Activated CD4-positive, alpha-beta memory T cell treated with anti-CD3 and anti-CD28 coated beads for 36 hours (primary cell): ENCODE measurements at regions of chr22 and their contacts with region 1.

Region 1: DNA sequence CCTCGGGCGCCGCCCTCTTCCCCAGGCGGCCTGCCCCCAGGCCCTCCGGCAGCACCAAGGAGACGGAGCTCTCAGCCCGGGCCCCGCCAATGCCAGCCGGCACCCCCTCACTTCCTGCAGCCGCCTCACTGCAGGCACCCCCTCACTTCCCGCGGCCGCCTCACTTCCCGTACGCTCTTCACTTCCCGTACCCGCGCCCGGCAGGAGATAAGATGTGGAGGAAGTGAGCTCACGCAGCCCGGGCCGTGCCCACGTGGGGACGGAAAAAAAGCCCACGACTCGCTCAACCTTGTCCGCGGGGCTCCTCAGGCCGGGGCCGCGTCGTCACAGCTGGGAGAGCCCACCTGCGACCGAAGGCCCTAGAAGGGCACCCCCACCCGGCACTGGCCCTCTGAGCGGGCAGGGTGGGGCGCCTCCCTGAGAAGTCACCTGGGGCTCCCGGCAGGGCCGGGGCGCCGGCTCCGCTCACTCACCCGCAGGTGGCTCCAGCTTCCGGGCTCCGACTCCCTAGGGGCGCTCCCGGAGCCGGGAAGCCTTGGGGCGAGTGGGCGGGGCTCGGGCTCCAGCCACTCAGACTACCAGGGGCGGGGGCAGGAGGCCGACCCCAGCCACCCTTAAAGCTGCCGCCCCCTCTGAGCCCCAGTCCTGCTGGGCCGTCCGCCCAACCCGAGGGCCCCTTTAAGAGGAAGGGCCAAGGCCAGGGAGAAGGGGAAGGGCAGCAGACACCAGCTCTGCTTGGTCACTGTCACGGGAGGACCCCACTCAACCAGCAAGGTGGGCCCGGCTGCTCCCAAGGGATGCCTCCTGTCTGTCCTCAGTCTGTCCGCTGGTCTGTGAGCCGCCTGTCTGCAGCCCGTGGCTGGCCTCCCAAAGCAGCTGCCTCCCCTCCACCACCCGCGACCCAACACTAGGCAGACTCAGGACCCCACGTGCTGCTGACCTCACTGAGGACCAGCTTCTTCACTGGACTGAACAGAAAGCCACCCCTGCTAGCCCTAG is 31.4 kb downstream of the PISD start:
- DNase-seq: peak; percentile 93
- H3K4me3 Mint-ChIP-seq: peak overlapping the region; percentile 81
- H3K27ac Mint-ChIP-seq: peak overlapping the region; percentile 91
- H3K4me1 Mint-ChIP-seq: peaks cover 61% of the 10 kb centered on the region
- H3K27me3 Mint-ChIP-seq: no peaks in the 10 kb centered on the region

Region 2: DNA sequence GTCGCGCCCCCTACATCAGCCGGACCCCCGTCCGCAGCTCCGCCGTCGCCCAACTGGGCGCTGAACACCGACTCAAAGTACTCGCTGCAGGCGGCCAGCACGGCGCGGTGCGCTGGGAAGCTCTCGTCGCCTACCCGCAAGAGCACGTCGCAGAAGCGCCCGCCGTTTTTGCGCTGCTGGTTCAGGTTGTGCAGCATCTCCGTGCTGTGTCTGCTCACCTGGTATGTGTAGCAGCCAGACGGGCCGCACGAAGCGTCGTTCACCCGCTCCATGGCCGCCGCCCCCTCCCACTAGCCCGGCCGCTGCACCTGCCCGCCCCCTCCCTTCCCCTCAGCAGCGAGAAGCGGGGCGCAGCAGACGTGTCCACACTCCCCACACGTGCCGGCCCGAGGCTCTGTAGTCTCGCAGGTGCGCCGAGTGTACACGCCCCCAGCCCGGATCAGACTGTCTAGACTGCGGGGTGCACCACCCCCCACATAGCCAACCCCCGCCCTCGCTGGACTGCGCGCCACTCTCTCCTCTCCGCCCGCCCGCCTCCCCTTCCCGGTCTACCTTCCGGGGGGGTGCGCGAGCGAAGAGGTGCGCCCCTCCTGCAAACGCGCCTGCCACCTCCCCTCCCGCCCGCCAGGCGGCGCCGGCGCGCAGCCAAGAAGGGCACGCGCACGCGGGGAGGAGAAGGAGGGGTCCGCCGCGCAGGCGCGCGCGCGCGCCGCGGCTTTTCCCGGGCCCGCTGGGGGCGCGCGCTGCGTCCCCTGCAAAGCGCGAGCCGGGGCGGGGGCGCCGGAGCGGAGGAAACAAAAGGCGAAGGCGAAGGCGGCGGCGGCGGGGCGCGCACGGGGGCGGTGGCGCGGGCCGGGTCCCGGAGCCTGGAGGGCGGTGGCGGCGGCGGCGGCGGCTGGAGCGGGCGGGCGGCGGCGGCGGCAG is 285.0 kb before region 1 on chr22:
- CTCF ChIA-PET with region 1: interaction called, 8 read pairs
- POLR2A ChIA-PET with region 1: interaction called, 3 read pairs
- intact Hi-C with region 1: loop called (anchors 2 kb)
- DNase-seq: peak; percentile 91
- H3K4me3 Mint-ChIP-seq: peak overlapping the region; percentile 89
- H3K27ac Mint-ChIP-seq: peak overlapping the region; percentile 91
- H3K4me1 Mint-ChIP-seq: peaks cover 46% of the 10 kb centered on the region
- H3K27me3 Mint-ChIP-seq: no peaks in the 10 kb centered on the region

Region 3: GRCh38 chr22:31451709-31452571 is 178.7 kb before region 1 on chr22:
- CTCF ChIA-PET with region 1: interaction called, 35 read pairs
- POLR2A ChIA-PET with region 1: no interaction called
- intact Hi-C with region 1: loop called (anchors 1 kb)
- DNase-seq: no peak
- H3K4me3 Mint-ChIP-seq: no peak overlapping the region
- H3K27ac Mint-ChIP-seq: peak overlapping the region; percentile 26
- H3K4me1 Mint-ChIP-seq: no peaks in the 10 kb centered on the region
- H3K27me3 Mint-ChIP-seq: no peaks in the 10 kb centered on the region

Region 4: GRCh38 chr22:31496007-31496734 is 134.5 kb before region 1 on chr22 and contains the start of gene SFI1:
- CTCF ChIA-PET with region 1: interaction called, 7 read pairs
- POLR2A ChIA-PET with region 1: interaction called, 3 read pairs
- intact Hi-C with region 1: loop called (anchors 2 kb)
- DNase-seq: peak; percentile 96
- H3K4me3 Mint-ChIP-seq: peak within 1 kb of the TSS; percentile 92
- H3K27ac Mint-ChIP-seq: peak within 1 kb of the TSS; percentile 94
- H3K4me1 Mint-ChIP-seq: peaks cover 50% of the 10 kb centered on the region
- H3K27me3 Mint-ChIP-seq: no peaks in the 10 kb centered on the region
- total RNA-seq, gene SFI1: 227 to 240 TPM

Region 5: GRCh38 chr22:31561238-31561887 is 69.3 kb before region 1 on chr22:
- CTCF ChIA-PET with region 1: interaction called, 9 read pairs
- POLR2A ChIA-PET with region 1: no interaction called
- intact Hi-C with region 1: loop called (anchors 1 kb)
- DNase-seq: peak; percentile 74
- H3K4me3 Mint-ChIP-seq: no peak overlapping the region
- H3K27ac Mint-ChIP-seq: peak overlapping the region; percentile 59
- H3K4me1 Mint-ChIP-seq: peaks cover 2% of the 10 kb centered on the region
- H3K27me3 Mint-ChIP-seq: no peaks in the 10 kb centered on the region

Region 6: GRCh38 chr22:31585161-31585859 is 45.3 kb before region 1 on chr22:
- CTCF ChIA-PET with region 1: interaction called, 7 read pairs
- POLR2A ChIA-PET with region 1: no interaction called
- intact Hi-C with region 1: loop called (anchors 1 kb)
- DNase-seq: peak; percentile 49
- H3K4me3 Mint-ChIP-seq: no peak overlapping the region
- H3K27ac Mint-ChIP-seq: peak overlapping the region; percentile 6
- H3K4me1 Mint-ChIP-seq: peaks cover 55% of the 10 kb centered on the region
- H3K27me3 Mint-ChIP-seq: no peaks in the 10 kb centered on the region

Region 7: GRCh38 chr22:31602259-31602952 is 28.2 kb before region 1 on chr22:
- CTCF ChIA-PET with region 1: no interaction called
- POLR2A ChIA-PET with region 1: no interaction called
- intact Hi-C with region 1: no loop called
- DNase-seq: no peak
- H3K4me3 Mint-ChIP-seq: no peak overlapping the region
- H3K27ac Mint-ChIP-seq: no peak overlapping the region
- H3K4me1 Mint-ChIP-seq: peaks cover 3% of the 10 kb centered on the region
- H3K27me3 Mint-ChIP-seq: no peaks in the 10 kb centered on the region

Region 8: DNA sequence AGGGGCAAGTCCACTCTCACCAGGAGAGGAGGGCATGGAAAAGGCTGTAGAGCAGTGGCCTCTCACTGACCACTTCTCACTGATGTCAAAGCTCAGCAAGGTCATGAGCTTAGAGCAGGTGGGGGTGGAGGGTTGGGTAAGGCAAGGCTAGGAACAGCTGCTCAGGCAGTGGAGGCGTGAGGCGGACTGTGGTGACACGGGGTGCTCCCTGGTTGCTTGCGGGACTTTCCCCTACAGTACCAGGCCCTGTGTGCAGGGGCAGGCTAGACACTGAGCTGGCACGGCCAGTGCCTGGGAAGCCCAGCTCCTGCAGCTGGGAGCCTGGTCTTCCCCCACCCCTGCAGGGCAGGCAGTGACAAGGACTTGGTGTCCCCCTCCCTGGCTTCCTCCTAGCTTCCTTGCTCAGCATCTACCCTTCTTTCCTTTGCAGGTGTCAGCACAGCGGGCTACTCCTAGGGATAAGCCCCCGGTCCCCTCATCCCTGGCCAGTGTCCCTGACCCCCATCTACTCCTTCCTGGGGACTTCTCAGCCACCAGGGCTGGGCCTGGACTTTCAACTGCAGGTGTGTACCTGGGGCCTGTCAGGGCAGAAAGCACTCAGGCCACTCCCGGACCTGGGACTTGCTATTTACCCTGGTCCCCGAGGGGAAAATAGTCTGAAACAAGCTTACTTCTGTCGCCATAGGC is 14.2 kb before region 1 on chr22:
- CTCF ChIA-PET with region 1: interaction called, 4 read pairs
- POLR2A ChIA-PET with region 1: interaction called, 11 read pairs
- intact Hi-C with region 1: no loop called
- DNase-seq: peak; percentile 77
- H3K4me3 Mint-ChIP-seq: no peak overlapping the region
- H3K27ac Mint-ChIP-seq: peak overlapping the region; percentile 69
- H3K4me1 Mint-ChIP-seq: peaks cover 25% of the 10 kb centered on the region
- H3K27me3 Mint-ChIP-seq: no peaks in the 10 kb centered on the region

Region 9: GRCh38 chr22:31734512-31734911 is 103.9 kb after region 1 on chr22:
- CTCF ChIA-PET with region 1: no interaction called
- POLR2A ChIA-PET with region 1: no interaction called
- intact Hi-C with region 1: no loop called
- DNase-seq: no peak
- H3K4me3 Mint-ChIP-seq: no peak overlapping the region
- H3K27ac Mint-ChIP-seq: no peak overlapping the region
- H3K4me1 Mint-ChIP-seq: peaks cover 38% of the 10 kb centered on the region
- H3K27me3 Mint-ChIP-seq: no peaks in the 10 kb centered on the region

Region 10: GRCh38 chr22:31818481-31819392 is 188.1 kb after region 1 on chr22:
- CTCF ChIA-PET with region 1: no interaction called
- POLR2A ChIA-PET with region 1: no interaction called
- intact Hi-C with region 1: no loop called
- DNase-seq: peak; percentile 60
- H3K4me3 Mint-ChIP-seq: no peak overlapping the region
- H3K27ac Mint-ChIP-seq: no peak overlapping the region
- H3K4me1 Mint-ChIP-seq: peaks cover 13% of the 10 kb centered on the region
- H3K27me3 Mint-ChIP-seq: no peaks in the 10 kb centered on the region